ENCODE measurements at regions of chr5 and their contacts with region 1.

Region 1: DNA sequence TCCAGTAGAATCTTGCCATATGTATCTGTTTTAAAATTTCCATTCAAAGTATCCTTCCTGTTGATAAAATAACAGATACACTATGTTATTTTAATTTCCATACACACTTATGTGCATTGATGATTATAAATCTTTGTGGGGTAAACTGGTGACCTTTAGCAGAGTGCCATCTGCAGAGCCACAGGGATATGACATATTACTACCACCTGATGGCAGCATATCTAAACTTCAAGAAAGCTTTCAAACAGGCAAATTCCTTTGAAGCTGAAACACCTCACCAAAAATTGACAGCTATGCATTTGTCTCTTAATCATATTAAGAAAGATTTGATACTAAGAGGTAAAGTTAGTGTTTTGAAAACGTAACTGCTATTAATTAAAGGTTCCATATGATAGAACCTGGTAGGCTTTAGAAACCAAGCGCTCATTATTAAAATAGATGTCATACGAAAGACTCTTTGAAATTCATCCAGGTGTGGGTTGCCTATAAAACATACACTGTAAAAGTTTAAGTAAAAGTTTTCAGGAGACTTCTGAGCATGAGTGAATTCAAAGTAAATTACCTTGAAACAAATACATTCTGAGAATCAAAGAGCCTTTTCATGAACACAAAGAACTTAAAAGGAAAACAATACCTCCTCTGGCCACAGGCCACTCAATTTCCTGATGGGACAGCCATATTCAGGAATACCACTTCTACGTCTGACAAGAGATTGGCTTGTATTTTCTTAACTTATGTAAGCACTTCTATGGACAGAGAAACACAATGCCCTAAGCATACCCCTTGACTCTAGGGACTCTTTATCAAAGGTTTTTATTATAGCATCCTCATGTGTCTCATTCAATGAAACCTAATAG is 93.3 kb downstream of the KIAA0825 start:
- DNase-seq: peak in 4 of 5 donors; percentile 43 to 54 (median 48)
- H3K4me3 ChIP-seq: no peak overlapping the region
- H3K4me3 Mint-ChIP-seq: no peak overlapping the region
- H3K27ac ChIP-seq: no peak overlapping the region
- H3K27ac Mint-ChIP-seq: no peak overlapping the region
- H3K4me1 ChIP-seq: no peaks in the 10 kb centered on the region
- H3K4me1 Mint-ChIP-seq: peaks cover 0 to 2% (median 0%) of the 10 kb centered on the region in 4 donors
- H3K27me3 ChIP-seq: no peaks in the 10 kb centered on the region
- H3K27me3 Mint-ChIP-seq: no peaks in the 10 kb centered on the region

Region 2: DNA sequence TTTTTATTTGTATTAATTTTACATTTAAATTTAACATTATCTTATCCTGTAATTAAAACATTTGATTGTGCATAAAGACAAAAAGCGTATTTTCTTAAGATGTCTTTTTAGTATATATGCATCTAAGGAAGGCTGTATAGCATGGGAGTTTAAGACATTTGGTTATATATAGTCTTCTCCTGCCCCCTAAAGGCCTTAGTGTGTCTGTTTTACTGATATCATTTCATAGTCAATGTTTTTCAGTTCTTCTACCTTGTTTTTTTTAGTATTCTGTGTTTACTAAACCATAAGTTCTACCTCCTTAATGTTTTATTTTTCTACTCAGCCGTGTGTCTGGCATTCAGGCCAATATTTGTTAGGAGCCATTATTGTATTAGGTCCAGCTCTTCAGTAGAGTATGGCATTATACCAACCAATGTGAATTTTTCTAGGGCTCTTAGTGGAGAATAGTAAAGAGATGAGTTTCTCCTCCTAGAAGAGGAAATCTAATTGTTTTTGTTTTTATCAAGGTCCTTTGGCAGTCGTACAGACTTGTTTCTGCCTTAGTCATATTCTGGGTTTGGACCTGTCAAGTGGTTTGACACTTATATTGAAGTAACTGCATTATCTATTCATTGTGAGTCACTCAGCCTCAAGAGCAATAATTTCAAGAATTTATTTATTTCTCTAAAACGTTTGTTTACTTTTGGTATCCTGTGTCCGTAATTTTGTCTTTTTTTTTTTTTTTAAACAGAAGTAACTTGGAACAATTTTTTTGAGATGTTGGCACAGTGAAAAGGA is 168.2 kb after region 1 on chr5:
- CTCF ChIA-PET with region 1: interaction called, 36 read pairs
- POLR2A ChIA-PET with region 1: no interaction called
- intact Hi-C with region 1: loop called (anchors 1 kb)
- DNase-seq: peak in 4 of 5 donors; percentile 27 to 46 (median 38)
- H3K4me3 ChIP-seq: no peak overlapping the region
- H3K4me3 Mint-ChIP-seq: no peak overlapping the region
- H3K27ac ChIP-seq: no peak overlapping the region
- H3K27ac Mint-ChIP-seq: peak overlapping the region in 2 of 7 donors; percentile 16 to 38
- H3K4me1 ChIP-seq: no peaks in the 10 kb centered on the region
- H3K4me1 Mint-ChIP-seq: peaks cover 0 to 8% (median 2%) of the 10 kb centered on the region in 4 donors
- H3K27me3 ChIP-seq: no peaks in the 10 kb centered on the region
- H3K27me3 Mint-ChIP-seq: no peaks in the 10 kb centered on the region

Region 3: GRCh38 chr5:94740286-94740685 is 215.2 kb after region 1 on chr5:
- CTCF ChIA-PET with region 1: interaction called, 74 read pairs
- POLR2A ChIA-PET with region 1: interaction called, 5 read pairs
- intact Hi-C with region 1: loop called (anchors 1 kb)
- DNase-seq: no peak
- H3K4me3 ChIP-seq: no peak overlapping the region
- H3K4me3 Mint-ChIP-seq: no peak overlapping the region
- H3K27ac ChIP-seq: no peak overlapping the region
- H3K27ac Mint-ChIP-seq: no peak overlapping the region
- H3K4me1 ChIP-seq: no peaks in the 10 kb centered on the region
- H3K4me1 Mint-ChIP-seq: no peaks in the 10 kb centered on the region
- H3K27me3 ChIP-seq: no peaks in the 10 kb centered on the region
- H3K27me3 Mint-ChIP-seq: peaks cover 0 to 3% of the 10 kb centered on the region in 2 donors

Measured in CD4-positive, alpha-beta memory T cell (primary cell).